ENCODE measurements at regions of chr21 and their contacts with region 1.

Region 1: GRCh38 chr21:15848632-15849031 is 118.8 kb downstream of the USP25 start:
- DNase-seq: no peak
- ATAC-seq: no peak
- H3K4me3 ChIP-seq: no peak overlapping the region
- H3K4me3 Mint-ChIP-seq: no peak overlapping the region
- H3K27ac ChIP-seq: no peak overlapping the region
- H3K27ac Mint-ChIP-seq: no peak overlapping the region
- H3K4me1 ChIP-seq: no peaks in the 10 kb centered on the region
- H3K4me1 Mint-ChIP-seq: peaks cover 0 to 6% (median 4%) of the 10 kb centered on the region in 7 donors
- H3K27me3 ChIP-seq: no peaks in the 10 kb centered on the region
- H3K27me3 Mint-ChIP-seq: no peaks in the 10 kb centered on the region

Region 2: GRCh38 chr21:15422783-15423182 is 425.8 kb before region 1 on chr21:
- CTCF ChIA-PET with region 1: no interaction called
- POLR2A ChIA-PET with region 1: no interaction called
- intact Hi-C with region 1: no loop called
- DNase-seq: no peak
- ATAC-seq: no peak
- H3K4me3 ChIP-seq: no peak overlapping the region
- H3K4me3 Mint-ChIP-seq: no peak overlapping the region
- H3K27ac ChIP-seq: no peak overlapping the region
- H3K27ac Mint-ChIP-seq: no peak overlapping the region
- H3K4me1 ChIP-seq: peaks cover 0 to 5% of the 10 kb centered on the region in 2 donors
- H3K4me1 Mint-ChIP-seq: peaks cover 2 to 24% (median 16%) of the 10 kb centered on the region in 7 donors
- H3K27me3 ChIP-seq: no peaks in the 10 kb centered on the region
- H3K27me3 Mint-ChIP-seq: no peaks in the 10 kb centered on the region

Region 3: GRCh38 chr21:15797577-15798363 is 50.9 kb before region 1 on chr21:
- CTCF ChIA-PET with region 1: no interaction called
- POLR2A ChIA-PET with region 1: no interaction called
- intact Hi-C with region 1: loop called in 1 of 2 experiments (anchors 5 kb)
- DNase-seq: no peak
- ATAC-seq: no peak
- H3K4me3 ChIP-seq: no peak overlapping the region
- H3K4me3 Mint-ChIP-seq: no peak overlapping the region
- H3K27ac ChIP-seq: no peak overlapping the region
- H3K27ac Mint-ChIP-seq: peak overlapping the region in 6 of 9 donors; percentile 1 to 66 (median 32)
- H3K4me1 ChIP-seq: peaks cover 0 to 12% of the 10 kb centered on the region in 2 donors
- H3K4me1 Mint-ChIP-seq: peaks cover 31 to 90% (median 61%) of the 10 kb centered on the region in 7 donors
- H3K27me3 ChIP-seq: no peaks in the 10 kb centered on the region
- H3K27me3 Mint-ChIP-seq: no peaks in the 10 kb centered on the region

Region 4: GRCh38 chr21:15870819-15871218 is 22.2 kb after region 1 on chr21:
- CTCF ChIA-PET with region 1: no interaction called
- POLR2A ChIA-PET with region 1: no interaction called
- intact Hi-C with region 1: loop called in 1 of 2 experiments (anchors 2 kb)
- DNase-seq: no peak
- ATAC-seq: no peak
- H3K4me3 ChIP-seq: no peak overlapping the region
- H3K4me3 Mint-ChIP-seq: no peak overlapping the region
- H3K27ac ChIP-seq: no peak overlapping the region
- H3K27ac Mint-ChIP-seq: no peak overlapping the region
- H3K4me1 ChIP-seq: no peaks in the 10 kb centered on the region
- H3K4me1 Mint-ChIP-seq: peaks cover 0 to 6% (median 0%) of the 10 kb centered on the region in 7 donors
- H3K27me3 ChIP-seq: no peaks in the 10 kb centered on the region
- H3K27me3 Mint-ChIP-seq: no peaks in the 10 kb centered on the region